ENCODE measurements at regions of chr1 and their contacts with region 1.

Region 1: GRCh38 chr1:236064674-236065508 is at the start of gene NID1:
- DNase-seq: peak; percentile 75
- H3K4me3 ChIP-seq: peak within 1 kb of the TSS; percentile 75 to 89 (median 89)
- H3K27ac ChIP-seq: peak within 1 kb of the TSS; percentile 55
- H3K4me1 ChIP-seq: peaks cover 8% of the 10 kb centered on the region
- H3K27me3 ChIP-seq: no peaks in the 10 kb centered on the region
- CTCF ChIP-seq: peak in 1 of 2 donors; percentile 52
- POLR2A ChIP-seq: peak; percentile 27
- total RNA-seq, gene NID1: 87.0 and 102 TPM in 2 replicates

Region 2: GRCh38 chr1:235999259-235999925 is 65.5 kb before region 1 on chr1:
- CTCF ChIA-PET with region 1: interaction called, 3 read pairs
- POLR2A ChIA-PET with region 1: no interaction called
- dilution Hi-C with region 1: no loop called
- intact Hi-C with region 1: loop called (anchors 1 kb)
- DNase-seq: peak; percentile 95
- H3K4me3 ChIP-seq: no peak overlapping the region
- H3K27ac ChIP-seq: peak overlapping the region; percentile 89
- H3K4me1 ChIP-seq: peaks cover 38% of the 10 kb centered on the region
- H3K27me3 ChIP-seq: no peaks in the 10 kb centered on the region
- CTCF ChIP-seq: no peak
- POLR2A ChIP-seq: peak; percentile 40

Region 3: GRCh38 chr1:236085545-236086159 is 20.8 kb after region 1 on chr1:
- CTCF ChIA-PET with region 1: interaction called, 3 read pairs
- POLR2A ChIA-PET with region 1: no interaction called
- dilution Hi-C with region 1: no loop called
- intact Hi-C with region 1: loop called (anchors 1 kb)
- DNase-seq: no peak
- H3K4me3 ChIP-seq: no peak overlapping the region
- H3K27ac ChIP-seq: no peak overlapping the region
- H3K4me1 ChIP-seq: peaks cover 2% of the 10 kb centered on the region
- H3K27me3 ChIP-seq: no peaks in the 10 kb centered on the region
- CTCF ChIP-seq: no peak
- POLR2A ChIP-seq: no peak

Measured in endothelial cell of umbilical vein (primary cell).